Activated B cell treated with CpG ODN at 0.5 μM for 24 hours (primary cell): ENCODE measurements at regions of chr5 and their contacts with region 1.

Region 1: GRCh38 chr5:100872408-100873190 is 30.5 kb downstream of the ST8SIA4 start:
- DNase-seq: no peak
- ATAC-seq: peak; percentile 87
- H3K4me3 Mint-ChIP-seq: peak overlapping the region; percentile 57
- H3K27ac Mint-ChIP-seq: peak overlapping the region; percentile 68
- H3K4me1 Mint-ChIP-seq: peaks cover 52% of the 10 kb centered on the region
- H3K27me3 Mint-ChIP-seq: no peaks in the 10 kb centered on the region
- CTCF ChIP-seq: no peak

Region 2: DNA sequence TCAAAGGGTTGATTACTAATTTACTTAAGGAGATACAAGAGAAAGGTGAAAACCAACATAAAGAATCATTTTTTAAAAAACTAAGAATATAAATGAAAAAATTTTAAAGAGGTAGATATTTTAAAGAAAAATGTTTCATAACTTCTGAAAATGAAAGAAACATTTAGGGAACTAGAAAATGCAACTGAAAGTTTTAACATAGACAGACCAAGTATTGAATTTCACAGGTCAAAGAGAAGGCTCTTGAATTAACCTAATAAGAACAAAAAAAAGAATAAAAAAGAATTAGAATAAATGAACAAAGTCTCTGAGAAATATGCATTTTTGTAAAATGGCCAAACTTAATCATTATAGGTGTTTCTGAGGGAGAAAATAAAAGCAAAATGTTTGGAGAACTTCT is 353.5 kb before region 1 on chr5:
- CTCF ChIA-PET with region 1: no interaction called
- POLR2A ChIA-PET with region 1: no interaction called
- intact Hi-C with region 1: no loop called
- DNase-seq: no peak
- ATAC-seq: no peak
- H3K4me3 Mint-ChIP-seq: no peak overlapping the region
- H3K27ac Mint-ChIP-seq: no peak overlapping the region
- H3K4me1 Mint-ChIP-seq: no peaks in the 10 kb centered on the region
- H3K27me3 Mint-ChIP-seq: peaks cover 17% of the 10 kb centered on the region
- CTCF ChIP-seq: no peak

Region 3: DNA sequence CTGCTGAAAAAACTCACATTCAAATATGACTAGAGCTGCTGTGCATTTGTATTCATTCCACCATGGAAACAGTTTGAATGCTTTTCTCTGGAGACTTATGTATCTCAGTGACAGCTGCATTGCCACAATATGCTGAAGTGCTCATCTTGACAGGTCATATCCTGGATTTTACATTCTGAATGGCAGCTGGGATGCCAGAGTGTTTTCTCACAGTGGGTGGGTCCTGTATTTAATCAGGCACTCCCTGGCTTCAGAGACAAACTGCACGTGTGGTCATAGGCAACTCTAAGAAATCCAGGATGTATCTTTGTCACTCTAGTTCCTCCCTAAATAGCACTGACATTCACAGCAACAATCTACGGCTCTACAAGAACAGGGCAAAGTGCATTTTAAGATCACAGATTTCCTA is 45.1 kb before region 1 on chr5:
- CTCF ChIA-PET with region 1: no interaction called
- POLR2A ChIA-PET with region 1: interaction called, 10 read pairs
- intact Hi-C with region 1: loop called (anchors 2 kb)
- DNase-seq: no peak
- ATAC-seq: peak; percentile 35
- H3K4me3 Mint-ChIP-seq: peak overlapping the region; percentile 72
- H3K27ac Mint-ChIP-seq: peak overlapping the region; percentile 89
- H3K4me1 Mint-ChIP-seq: peaks cover 39% of the 10 kb centered on the region
- H3K27me3 Mint-ChIP-seq: no peaks in the 10 kb centered on the region
- CTCF ChIP-seq: no peak

Region 4: GRCh38 chr5:100840384-100840783 is 32.2 kb before region 1 on chr5:
- CTCF ChIA-PET with region 1: no interaction called
- POLR2A ChIA-PET with region 1: interaction called, 6 read pairs
- intact Hi-C with region 1: loop called (anchors 1 kb)
- DNase-seq: no peak
- ATAC-seq: peak; percentile 90
- H3K4me3 Mint-ChIP-seq: peak overlapping the region; percentile 63
- H3K27ac Mint-ChIP-seq: peak overlapping the region; percentile 86
- H3K4me1 Mint-ChIP-seq: peaks cover 84% of the 10 kb centered on the region
- H3K27me3 Mint-ChIP-seq: no peaks in the 10 kb centered on the region
- CTCF ChIP-seq: no peak

Region 5: GRCh38 chr5:100852988-100853449 is 19.6 kb before region 1 on chr5:
- CTCF ChIA-PET with region 1: interaction called, 3 read pairs
- POLR2A ChIA-PET with region 1: interaction called, 5 read pairs
- intact Hi-C with region 1: loop called (anchors 1 kb)
- DNase-seq: no peak
- ATAC-seq: peak; percentile 92
- H3K4me3 Mint-ChIP-seq: peak overlapping the region; percentile 55
- H3K27ac Mint-ChIP-seq: peak overlapping the region; percentile 83
- H3K4me1 Mint-ChIP-seq: peaks cover 55% of the 10 kb centered on the region
- H3K27me3 Mint-ChIP-seq: no peaks in the 10 kb centered on the region
- CTCF ChIP-seq: no peak

Region 6: GRCh38 chr5:100860407-100860806 is 12.2 kb before region 1 on chr5:
- CTCF ChIA-PET with region 1: no interaction called
- POLR2A ChIA-PET with region 1: interaction called, 5 read pairs
- intact Hi-C with region 1: loop called (anchors 1 kb)
- DNase-seq: no peak
- ATAC-seq: no peak
- H3K4me3 Mint-ChIP-seq: no peak overlapping the region
- H3K27ac Mint-ChIP-seq: peak overlapping the region; percentile 25
- H3K4me1 Mint-ChIP-seq: peaks cover 52% of the 10 kb centered on the region
- H3K27me3 Mint-ChIP-seq: no peaks in the 10 kb centered on the region
- CTCF ChIP-seq: no peak

Region 7: DNA sequence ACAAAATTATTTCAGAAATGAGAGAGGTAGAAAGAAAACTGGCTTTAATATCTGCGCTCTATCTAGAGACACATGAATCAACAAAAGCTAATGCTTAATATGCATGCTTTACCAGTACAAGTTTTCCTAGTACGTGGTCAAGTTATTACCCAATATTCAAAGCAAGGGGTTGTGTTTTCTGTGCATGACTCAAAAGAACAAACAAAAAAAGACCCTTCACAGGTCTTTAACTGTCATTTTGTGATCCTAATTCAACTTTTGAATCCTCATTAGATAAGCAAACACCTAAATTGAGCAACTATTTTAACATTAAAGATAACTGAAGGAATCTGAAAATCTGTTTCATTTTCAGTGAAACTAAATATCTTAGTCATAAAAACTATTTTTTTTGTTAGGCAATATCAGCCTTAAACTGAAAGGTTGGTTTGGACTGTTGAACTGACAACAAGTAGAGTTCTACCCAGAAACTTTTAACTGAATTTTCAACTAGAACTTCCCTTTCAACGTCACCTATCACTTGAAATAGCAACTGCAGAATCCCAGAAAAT is 17.9 kb after region 1 on chr5:
- CTCF ChIA-PET with region 1: no interaction called
- POLR2A ChIA-PET with region 1: interaction called, 3 read pairs
- intact Hi-C with region 1: loop called (anchors 1 kb)
- DNase-seq: no peak
- ATAC-seq: peak; percentile 47
- H3K4me3 Mint-ChIP-seq: peak overlapping the region; percentile 70
- H3K27ac Mint-ChIP-seq: peak overlapping the region; percentile 88
- H3K4me1 Mint-ChIP-seq: peaks cover 72% of the 10 kb centered on the region
- H3K27me3 Mint-ChIP-seq: no peaks in the 10 kb centered on the region
- CTCF ChIP-seq: no peak

Region 8: GRCh38 chr5:101067429-101067828 is 194.8 kb after region 1 on chr5:
- CTCF ChIA-PET with region 1: no interaction called
- POLR2A ChIA-PET with region 1: no interaction called
- intact Hi-C with region 1: no loop called
- DNase-seq: no peak
- ATAC-seq: no peak
- H3K4me3 Mint-ChIP-seq: no peak overlapping the region
- H3K27ac Mint-ChIP-seq: no peak overlapping the region
- H3K4me1 Mint-ChIP-seq: no peaks in the 10 kb centered on the region
- H3K27me3 Mint-ChIP-seq: no peaks in the 10 kb centered on the region
- CTCF ChIP-seq: no peak